ENCODE measurements at regions of chr7 and their contacts with region 1.

Region 1: GRCh38 chr7:105652359-105652993 is 71.2 kb upstream of the EFCAB10 start:
- DNase-seq: no peak

Region 2: DNA sequence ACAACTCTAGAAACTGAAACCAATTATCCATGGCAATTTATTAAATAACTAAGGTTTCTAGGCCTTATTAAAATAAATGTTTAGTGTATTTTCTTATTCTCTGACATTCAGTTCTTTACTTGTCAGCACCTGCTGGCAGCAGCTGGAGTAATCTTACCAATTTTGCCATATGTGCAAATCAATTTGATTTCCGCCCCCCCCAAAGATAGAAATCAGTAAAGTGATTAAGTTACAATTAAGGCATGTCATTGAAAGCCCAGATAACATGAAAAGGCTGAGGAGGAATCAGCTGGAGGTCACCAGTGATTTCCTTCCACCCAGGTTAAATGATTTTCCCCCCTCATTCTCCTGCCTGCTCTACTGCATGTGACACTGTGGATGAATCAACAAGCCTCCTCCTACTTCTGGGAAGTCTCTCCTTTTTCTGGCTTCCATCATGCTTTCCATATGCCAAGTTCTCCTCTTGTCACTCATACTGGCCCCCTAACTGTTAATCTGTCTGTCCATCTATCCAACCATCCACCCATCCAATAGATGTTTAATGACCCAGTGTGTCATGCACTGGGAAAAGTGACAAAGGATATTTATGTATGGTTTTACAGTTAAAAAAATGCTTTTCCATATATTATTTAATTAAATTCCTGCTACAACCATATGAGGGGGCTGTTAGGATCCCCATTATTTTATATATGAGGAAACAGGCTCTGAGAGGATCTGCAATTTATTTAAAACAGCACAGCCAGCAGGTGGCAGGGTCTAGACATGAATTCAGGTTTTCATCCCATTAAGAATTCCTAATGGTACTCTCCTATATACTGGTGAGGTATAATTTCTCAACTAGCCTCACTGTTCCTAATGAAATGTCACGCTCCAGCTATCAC is 107.4 kb after region 1 on chr7:
- intact Hi-C with region 1: loop called (anchors 5 kb)
- DNase-seq: no peak

Region 3: DNA sequence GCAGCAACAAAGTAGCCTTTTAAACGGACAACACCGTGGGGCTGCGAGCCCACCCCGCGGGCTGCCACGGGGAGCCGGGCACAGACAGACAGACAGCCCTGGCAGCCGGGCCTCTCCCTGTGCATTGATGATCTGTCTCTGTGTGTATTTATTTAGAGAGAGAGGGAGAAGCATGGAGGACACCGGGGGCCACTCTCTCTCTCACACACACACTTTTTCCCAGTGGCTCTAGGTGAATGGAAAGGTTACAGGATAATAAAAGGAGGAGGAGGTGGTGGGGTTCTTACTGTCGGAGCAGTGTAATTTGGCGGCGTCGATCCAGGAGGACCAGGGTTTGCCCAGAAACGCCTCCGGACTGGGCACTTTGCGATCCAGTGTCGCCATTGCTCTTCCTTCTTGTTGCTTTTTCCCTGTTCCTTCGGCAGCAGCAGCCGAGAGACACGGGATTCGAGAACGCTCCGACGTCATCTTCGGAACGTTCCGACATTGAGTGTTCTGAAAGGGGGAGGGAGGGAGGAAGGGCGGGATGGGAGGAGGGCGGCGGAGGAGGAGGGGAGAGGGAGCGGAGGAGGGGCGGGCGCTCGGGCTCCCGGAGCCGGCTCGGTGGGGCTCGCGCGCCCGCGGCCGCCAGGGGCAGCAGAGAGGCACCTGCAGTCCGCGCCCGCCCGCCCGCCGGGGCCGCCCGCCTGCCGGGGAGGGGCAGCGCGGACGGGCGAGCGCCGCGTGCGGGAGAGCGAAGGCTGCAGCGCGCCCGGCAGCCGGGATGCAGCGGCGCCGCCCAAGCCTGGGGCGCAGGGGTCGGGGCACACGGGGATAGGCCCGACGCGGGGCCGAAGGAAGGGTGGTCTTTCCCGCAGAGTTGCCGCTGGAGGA is 223.9 kb after region 1 on chr7 and contains the start of gene ATXN7L1:
- intact Hi-C with region 1: loop called (anchors 10 kb)
- DNase-seq: peak; percentile 96
- total RNA-seq, gene ATXN7L1: 5.5 TPM

Region 4: GRCh38 chr7:106009403-106010226 is 357.1 kb after region 1 on chr7:
- intact Hi-C with region 1: loop called (anchors 10 kb)
- DNase-seq: peak; percentile 89

Region 5: DNA sequence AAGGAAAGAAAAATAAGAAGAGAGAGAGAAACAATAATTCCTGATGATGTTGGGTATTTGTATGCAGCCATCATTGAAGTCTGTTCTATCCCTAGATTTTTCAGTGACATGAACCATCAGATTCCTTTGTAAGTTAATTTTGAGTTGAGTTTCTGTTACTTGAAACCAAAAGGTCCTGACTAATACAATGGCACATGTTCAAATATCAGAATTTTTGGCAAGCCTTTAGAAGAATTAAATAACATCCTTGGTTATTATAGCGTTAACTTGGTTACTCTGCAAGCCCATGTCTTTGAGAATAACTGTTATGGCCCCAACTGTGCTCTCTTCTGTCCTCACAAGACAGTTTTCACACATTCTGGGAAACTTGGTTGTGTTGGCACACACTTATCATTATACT is 393.1 kb after region 1 on chr7:
- intact Hi-C with region 1: loop called (anchors 2 kb)
- DNase-seq: no peak

Region 6: GRCh38 chr7:106153891-106154449 is 501.5 kb after region 1 on chr7:
- intact Hi-C with region 1: loop called (anchors 10 kb)
- DNase-seq: peak; percentile 84